Thyroid gland (tissue), 4 donors: ENCODE measurements at regions of chr2 and their contacts with region 1.

Region 1: DNA sequence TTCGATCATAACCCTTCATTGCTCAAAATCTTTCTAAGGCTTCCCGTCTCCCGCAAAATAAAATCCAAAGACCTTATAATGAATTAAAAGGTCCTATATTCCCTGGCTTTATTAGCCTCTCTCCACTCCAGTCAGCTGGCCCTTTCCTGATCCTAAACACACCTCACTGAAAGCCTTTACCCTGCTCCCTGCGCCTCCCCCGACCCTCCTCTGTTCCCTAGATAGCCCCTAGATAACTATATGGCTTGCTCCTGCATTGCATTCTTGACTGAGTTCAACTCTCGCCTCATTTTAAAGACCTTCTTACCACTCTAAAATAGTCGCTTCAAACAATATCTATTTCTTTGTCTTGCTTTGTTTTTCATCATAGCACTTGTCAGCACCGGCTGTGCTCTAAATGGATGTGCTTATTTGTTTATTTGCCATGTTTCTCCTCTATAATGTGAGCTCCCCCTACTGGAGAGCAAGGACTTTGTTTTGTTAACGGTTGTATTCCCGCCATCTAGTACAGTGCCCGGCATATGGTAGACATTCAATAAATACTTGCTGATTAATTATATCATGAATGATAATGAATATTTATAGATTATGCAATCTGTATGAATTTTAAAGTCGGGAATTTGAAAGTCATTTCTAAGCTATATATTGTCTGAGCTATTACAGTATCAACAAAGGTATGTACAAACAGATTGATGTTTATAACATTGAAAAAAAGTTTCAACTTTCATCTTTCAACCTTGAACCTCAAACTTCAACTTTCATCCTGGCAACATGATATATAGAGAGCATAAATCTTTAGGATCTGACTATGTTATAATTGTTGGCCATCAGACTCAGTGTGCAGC is 32.4 kb upstream of the VIT start:
- DNase-seq: no peak
- H3K4me3 ChIP-seq: no peak overlapping the region
- H3K27ac ChIP-seq: no peak overlapping the region
- H3K4me1 ChIP-seq: no peaks in the 10 kb centered on the region
- H3K27me3 ChIP-seq: no peaks in the 10 kb centered on the region
- CTCF ChIP-seq: peak; percentile 41 to 73 (median 64)
- POLR2A ChIP-seq: no peak

Region 2: GRCh38 chr2:36339607-36340218 is 324.4 kb before region 1 on chr2:
- intact Hi-C with region 1: loop called (anchors 10 kb)
- DNase-seq: no peak
- H3K4me3 ChIP-seq: no peak overlapping the region
- H3K27ac ChIP-seq: no peak overlapping the region
- H3K4me1 ChIP-seq: no peaks in the 10 kb centered on the region
- H3K27me3 ChIP-seq: no peaks in the 10 kb centered on the region
- CTCF ChIP-seq: no peak
- POLR2A ChIP-seq: no peak

Region 3: GRCh38 chr2:36511862-36512603 is 152.0 kb before region 1 on chr2:
- intact Hi-C with region 1: loop called (anchors 10 kb)
- DNase-seq: no peak
- H3K4me3 ChIP-seq: no peak overlapping the region
- H3K27ac ChIP-seq: no peak overlapping the region
- H3K4me1 ChIP-seq: peaks cover 4 to 6% of the 10 kb centered on the region in 2 donors
- H3K27me3 ChIP-seq: no peaks in the 10 kb centered on the region
- CTCF ChIP-seq: no peak
- POLR2A ChIP-seq: no peak